Posterior vena cava (tissue), 2 donors: ENCODE measurements at regions of chr10 and their contacts with region 1.

Region 1: DNA sequence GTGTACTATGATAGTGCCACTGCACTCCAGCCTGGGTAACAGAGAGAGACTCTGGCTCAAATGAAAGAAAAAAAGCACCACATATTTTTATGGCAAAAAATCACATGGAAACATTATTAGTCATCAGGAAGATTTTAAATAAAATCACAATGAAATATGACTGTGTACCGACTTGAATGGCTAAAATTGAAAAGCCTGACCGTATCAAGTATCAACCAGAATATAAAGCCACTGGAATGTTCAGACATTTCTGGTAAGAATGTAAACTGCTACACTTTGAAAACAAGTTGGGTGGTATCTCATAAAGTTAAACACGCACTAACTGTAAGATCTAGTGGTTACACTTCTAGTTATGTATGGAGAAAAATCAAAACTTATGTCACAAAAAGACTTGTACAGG is 306.7 kb upstream of the MBL2 start:
- DNase-seq: no peak

Region 2: DNA sequence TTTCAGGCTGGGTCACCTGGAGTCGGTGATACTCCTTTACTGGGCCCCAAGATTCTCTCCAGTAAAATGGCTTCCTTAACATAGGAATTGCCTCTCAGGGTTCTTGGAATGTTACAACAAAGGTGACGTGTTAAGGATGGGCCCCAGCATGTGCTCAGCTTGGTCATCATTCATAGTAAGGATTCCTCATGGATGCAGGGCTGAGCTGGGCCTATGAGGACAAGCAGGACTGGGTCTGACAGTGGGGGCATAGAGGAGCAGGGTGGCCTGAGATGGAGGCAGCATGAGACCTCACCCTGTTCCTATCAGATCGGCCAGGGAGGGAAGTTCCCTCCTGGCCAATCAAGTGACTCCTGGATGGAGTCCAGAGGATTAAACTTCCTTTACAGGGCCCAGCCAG is 293.9 kb before region 1 on chr10:
- intact Hi-C with region 1: loop called in 1 of 2 experiments (anchors 2 kb)
- DNase-seq: no peak